Activated T-helper 2 cell treated with anti-CD3 and anti-CD28 coated beads, Interferon-gamma antibody, Interleukin-2, Interleukin-4, amounts not matched to agents 10 μg/mL and 5 μg/mL and 100 μg/mL, durations not matched to agents 14 hours and 24 hours and 36 hours (primary cell): ENCODE measurements at regions of chr2 and their contacts with region 1.

Region 1: GRCh38 chr2:203997980-203998809 is 61.6 kb downstream of the ICOS start:
- DNase-seq: no peak
- H3K4me3 Mint-ChIP-seq: peak overlapping the region; percentile 24
- H3K27ac Mint-ChIP-seq: peak overlapping the region; percentile 77
- H3K4me1 Mint-ChIP-seq: peaks cover 64% of the 10 kb centered on the region
- H3K27me3 Mint-ChIP-seq: no peaks in the 10 kb centered on the region

Region 2: DNA sequence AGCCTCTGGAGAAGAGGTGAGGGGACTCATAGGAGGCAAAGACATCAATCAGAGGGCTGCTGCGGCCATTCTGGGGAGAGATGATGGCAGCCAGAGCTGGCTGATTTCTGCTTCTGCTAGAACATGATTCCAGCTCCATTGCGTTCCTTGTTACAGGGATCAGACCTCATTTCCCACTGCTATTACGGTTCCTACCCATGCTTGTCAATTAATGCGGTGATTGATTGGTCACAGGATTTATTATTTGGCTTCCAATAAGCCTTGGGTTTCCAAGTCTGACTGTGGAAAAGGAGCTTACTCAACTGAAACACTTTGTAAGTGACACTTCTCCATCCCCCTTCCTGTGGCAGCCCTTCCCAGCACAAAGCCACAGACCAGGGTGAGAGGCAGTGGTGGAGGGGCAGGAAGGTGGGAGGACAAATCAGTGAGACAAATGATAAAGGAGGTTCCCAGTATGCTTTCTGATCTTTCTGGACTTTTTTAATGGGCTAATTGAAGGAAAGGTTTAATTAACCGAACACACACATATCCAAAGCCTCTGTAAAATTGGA is 157.5 kb before region 1 on chr2:
- intact Hi-C with region 1: no loop called
- DNase-seq: no peak
- H3K4me3 Mint-ChIP-seq: no peak overlapping the region
- H3K27ac Mint-ChIP-seq: no peak overlapping the region
- H3K4me1 Mint-ChIP-seq: peaks cover 34% of the 10 kb centered on the region
- H3K27me3 Mint-ChIP-seq: no peaks in the 10 kb centered on the region

Region 3: GRCh38 chr2:203871371-203871983 is 126.7 kb before region 1 on chr2:
- intact Hi-C with region 1: loop called (anchors 5 kb)
- DNase-seq: peak; percentile 60
- H3K4me3 Mint-ChIP-seq: peak overlapping the region; percentile 96
- H3K27ac Mint-ChIP-seq: peak overlapping the region; percentile 95
- H3K4me1 Mint-ChIP-seq: peaks cover 57% of the 10 kb centered on the region
- H3K27me3 Mint-ChIP-seq: no peaks in the 10 kb centered on the region

Region 4: GRCh38 chr2:203940039-203940438 is 58.2 kb before region 1 on chr2:
- intact Hi-C with region 1: loop called (anchors 2 kb)
- DNase-seq: no peak
- H3K4me3 Mint-ChIP-seq: peak overlapping the region; percentile 98
- H3K27ac Mint-ChIP-seq: peak overlapping the region; percentile 90
- H3K4me1 Mint-ChIP-seq: peaks cover 52% of the 10 kb centered on the region
- H3K27me3 Mint-ChIP-seq: no peaks in the 10 kb centered on the region

Region 5: GRCh38 chr2:203972066-203972465 is 26.1 kb before region 1 on chr2:
- intact Hi-C with region 1: loop called (anchors 1 kb)
- DNase-seq: no peak
- H3K4me3 Mint-ChIP-seq: no peak overlapping the region
- H3K27ac Mint-ChIP-seq: no peak overlapping the region
- H3K4me1 Mint-ChIP-seq: peaks cover 15% of the 10 kb centered on the region
- H3K27me3 Mint-ChIP-seq: peaks cover 26% of the 10 kb centered on the region

Region 6: GRCh38 chr2:204015118-204015843 is 17.1 kb after region 1 on chr2:
- intact Hi-C with region 1: loop called (anchors 1 kb)
- DNase-seq: no peak
- H3K4me3 Mint-ChIP-seq: no peak overlapping the region
- H3K27ac Mint-ChIP-seq: peak overlapping the region; percentile 51
- H3K4me1 Mint-ChIP-seq: peaks cover 47% of the 10 kb centered on the region
- H3K27me3 Mint-ChIP-seq: no peaks in the 10 kb centered on the region